ENCODE measurements at regions of chr12 and their contacts with region 1.

Region 1: GRCh38 chr12:80241576-80242273 is 142.4 kb downstream of the OTOGL start:
- DNase-seq: no peak
- H3K4me3 ChIP-seq: no peak overlapping the region
- H3K4me3 Mint-ChIP-seq: no peak overlapping the region
- H3K27ac Mint-ChIP-seq: no peak overlapping the region
- H3K4me1 ChIP-seq: no peaks in the 10 kb centered on the region
- H3K4me1 Mint-ChIP-seq: no peaks in the 10 kb centered on the region
- H3K27me3 ChIP-seq: no peaks in the 10 kb centered on the region
- H3K27me3 Mint-ChIP-seq: no peaks in the 10 kb centered on the region
- CTCF ChIP-seq: no peak

Region 2: DNA sequence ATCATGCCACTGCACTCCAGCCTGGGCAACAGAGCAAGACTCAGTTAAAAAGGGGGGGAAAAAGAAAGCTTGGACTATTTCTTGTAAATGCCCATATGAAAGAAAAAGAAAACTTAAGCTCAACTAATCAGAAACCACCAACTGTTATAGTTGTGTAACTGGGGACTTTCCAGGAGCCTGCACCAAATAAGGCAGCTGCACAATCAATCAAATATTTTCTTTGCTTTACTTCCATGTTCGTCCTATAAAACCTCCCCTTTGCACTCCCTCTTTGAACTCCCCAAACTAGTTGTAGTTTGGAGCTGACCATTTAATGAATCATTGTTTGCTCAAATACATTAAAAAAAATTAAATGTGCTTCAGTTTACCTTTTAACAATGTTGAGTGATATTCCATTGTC is 87.5 kb before region 1 on chr12:
- CTCF ChIA-PET with region 1: no interaction called
- POLR2A ChIA-PET with region 1: no interaction called
- intact Hi-C with region 1: no loop called
- DNase-seq: no peak
- H3K4me3 ChIP-seq: no peak overlapping the region
- H3K4me3 Mint-ChIP-seq: no peak overlapping the region
- H3K27ac Mint-ChIP-seq: no peak overlapping the region
- H3K4me1 ChIP-seq: peaks cover 5% of the 10 kb centered on the region
- H3K4me1 Mint-ChIP-seq: no peaks in the 10 kb centered on the region
- H3K27me3 ChIP-seq: no peaks in the 10 kb centered on the region
- H3K27me3 Mint-ChIP-seq: no peaks in the 10 kb centered on the region
- CTCF ChIP-seq: no peak

Region 3: GRCh38 chr12:80219345-80219744 is 22.4 kb before region 1 on chr12:
- CTCF ChIA-PET with region 1: no interaction called
- POLR2A ChIA-PET with region 1: interaction called, 4 read pairs
- intact Hi-C with region 1: loop called (anchors 1 kb)
- DNase-seq: peak; percentile 40 to 63
- H3K4me3 ChIP-seq: no peak overlapping the region
- H3K4me3 Mint-ChIP-seq: peak overlapping the region; percentile 53
- H3K27ac Mint-ChIP-seq: no peak overlapping the region
- H3K4me1 ChIP-seq: peaks cover 32% of the 10 kb centered on the region
- H3K4me1 Mint-ChIP-seq: peaks cover 16% of the 10 kb centered on the region
- H3K27me3 ChIP-seq: no peaks in the 10 kb centered on the region
- H3K27me3 Mint-ChIP-seq: no peaks in the 10 kb centered on the region
- CTCF ChIP-seq: no peak

Region 4: DNA sequence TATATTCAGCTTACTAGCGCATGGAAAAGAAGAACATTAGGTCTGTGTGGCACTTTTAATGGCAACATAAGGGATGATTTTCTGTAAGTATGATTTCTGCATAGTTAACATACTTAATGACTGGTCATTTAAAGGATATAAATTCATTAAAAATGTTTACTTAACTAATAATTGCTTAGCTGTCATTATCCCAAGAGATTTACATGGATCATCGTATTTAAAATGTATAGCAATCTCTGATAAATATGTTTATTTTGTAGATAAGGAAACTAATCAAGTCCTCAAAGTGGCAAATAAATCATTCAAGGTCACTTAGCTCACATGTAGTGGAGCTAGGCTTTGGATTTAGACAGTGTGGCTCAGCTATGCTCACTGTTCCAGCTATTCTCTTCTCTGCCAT is 16.2 kb after region 1 on chr12:
- CTCF ChIA-PET with region 1: no interaction called
- POLR2A ChIA-PET with region 1: no interaction called
- intact Hi-C with region 1: no loop called
- DNase-seq: no peak
- H3K4me3 ChIP-seq: no peak overlapping the region
- H3K4me3 Mint-ChIP-seq: no peak overlapping the region
- H3K27ac Mint-ChIP-seq: no peak overlapping the region
- H3K4me1 ChIP-seq: no peaks in the 10 kb centered on the region
- H3K4me1 Mint-ChIP-seq: peaks cover 16% of the 10 kb centered on the region
- H3K27me3 ChIP-seq: no peaks in the 10 kb centered on the region
- H3K27me3 Mint-ChIP-seq: no peaks in the 10 kb centered on the region
- CTCF ChIP-seq: no peak

Region 5: GRCh38 chr12:80268924-80269749 is 27.4 kb after region 1 on chr12:
- CTCF ChIA-PET with region 1: no interaction called
- POLR2A ChIA-PET with region 1: no interaction called
- intact Hi-C with region 1: no loop called
- DNase-seq: no peak
- H3K4me3 ChIP-seq: no peak overlapping the region
- H3K4me3 Mint-ChIP-seq: no peak overlapping the region
- H3K27ac Mint-ChIP-seq: no peak overlapping the region
- H3K4me1 ChIP-seq: no peaks in the 10 kb centered on the region
- H3K4me1 Mint-ChIP-seq: peaks cover 7% of the 10 kb centered on the region
- H3K27me3 ChIP-seq: no peaks in the 10 kb centered on the region
- H3K27me3 Mint-ChIP-seq: peaks cover 5% of the 10 kb centered on the region
- CTCF ChIP-seq: no peak

Region 6: GRCh38 chr12:80373666-80374065 is 131.9 kb after region 1 on chr12:
- CTCF ChIA-PET with region 1: no interaction called
- POLR2A ChIA-PET with region 1: no interaction called
- intact Hi-C with region 1: no loop called
- DNase-seq: no peak
- H3K4me3 ChIP-seq: no peak overlapping the region
- H3K4me3 Mint-ChIP-seq: no peak overlapping the region
- H3K27ac Mint-ChIP-seq: no peak overlapping the region
- H3K4me1 ChIP-seq: no peaks in the 10 kb centered on the region
- H3K4me1 Mint-ChIP-seq: no peaks in the 10 kb centered on the region
- H3K27me3 ChIP-seq: no peaks in the 10 kb centered on the region
- H3K27me3 Mint-ChIP-seq: no peaks in the 10 kb centered on the region
- CTCF ChIP-seq: no peak